ENCODE measurements at regions of chr12 and their contacts with region 1.

Region 1: DNA sequence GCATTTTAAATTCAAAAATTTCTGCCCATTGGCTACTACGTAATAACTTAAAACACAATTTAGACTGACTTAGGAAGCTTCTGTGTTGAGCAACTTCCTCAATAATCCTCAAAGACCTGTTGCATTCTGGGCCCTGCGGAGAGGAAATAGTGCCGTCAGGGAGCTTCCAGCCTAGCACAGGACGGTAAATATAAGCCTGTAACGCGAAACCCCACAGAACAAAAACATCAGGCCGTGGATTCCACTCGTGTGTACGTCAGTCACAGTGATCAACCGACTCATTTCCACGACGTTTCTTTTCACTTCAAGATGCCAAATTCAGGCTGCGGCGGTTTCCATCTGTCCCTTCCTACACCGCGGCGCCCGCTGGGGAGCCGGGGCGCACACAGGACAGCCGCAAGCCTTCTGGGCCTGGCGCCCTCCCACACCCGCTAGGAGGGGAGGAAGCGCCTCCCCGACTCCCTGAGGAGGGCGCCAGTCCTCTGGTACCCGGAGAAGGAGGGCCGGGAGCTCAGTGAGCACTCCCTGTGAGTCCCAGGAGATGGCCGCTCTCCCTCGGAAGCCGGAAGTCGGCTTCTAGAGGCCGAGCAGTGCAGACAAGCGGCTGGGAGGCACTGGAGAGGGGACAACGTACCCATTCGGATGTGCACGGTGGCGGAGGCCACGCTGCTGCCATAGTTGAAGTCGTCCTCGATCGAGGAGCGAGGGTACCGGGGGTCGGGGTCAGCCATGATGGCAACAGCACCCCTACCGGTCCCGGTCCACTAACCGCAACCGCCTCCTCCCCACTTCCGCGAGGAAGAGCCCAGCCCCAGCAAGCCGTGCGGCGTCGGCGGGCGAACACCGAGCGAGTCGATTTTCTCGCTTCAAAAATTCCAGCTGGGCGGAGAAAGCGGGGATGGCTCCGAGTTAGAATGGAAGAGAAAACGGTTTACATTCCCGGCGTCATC is at the start of gene TMBIM4:
- DNase-seq: peak; percentile 81
- H3K4me3 Mint-ChIP-seq: peak within 1 kb of the TSS; percentile 91
- H3K27ac Mint-ChIP-seq: peak within 1 kb of the TSS; percentile 99
- H3K4me1 Mint-ChIP-seq: peaks cover 24% of the 10 kb centered on the region
- H3K27me3 Mint-ChIP-seq: no peaks in the 10 kb centered on the region
- total RNA-seq, gene TMBIM4: 62.4 and 75.0 TPM in 2 replicates

Region 2: DNA sequence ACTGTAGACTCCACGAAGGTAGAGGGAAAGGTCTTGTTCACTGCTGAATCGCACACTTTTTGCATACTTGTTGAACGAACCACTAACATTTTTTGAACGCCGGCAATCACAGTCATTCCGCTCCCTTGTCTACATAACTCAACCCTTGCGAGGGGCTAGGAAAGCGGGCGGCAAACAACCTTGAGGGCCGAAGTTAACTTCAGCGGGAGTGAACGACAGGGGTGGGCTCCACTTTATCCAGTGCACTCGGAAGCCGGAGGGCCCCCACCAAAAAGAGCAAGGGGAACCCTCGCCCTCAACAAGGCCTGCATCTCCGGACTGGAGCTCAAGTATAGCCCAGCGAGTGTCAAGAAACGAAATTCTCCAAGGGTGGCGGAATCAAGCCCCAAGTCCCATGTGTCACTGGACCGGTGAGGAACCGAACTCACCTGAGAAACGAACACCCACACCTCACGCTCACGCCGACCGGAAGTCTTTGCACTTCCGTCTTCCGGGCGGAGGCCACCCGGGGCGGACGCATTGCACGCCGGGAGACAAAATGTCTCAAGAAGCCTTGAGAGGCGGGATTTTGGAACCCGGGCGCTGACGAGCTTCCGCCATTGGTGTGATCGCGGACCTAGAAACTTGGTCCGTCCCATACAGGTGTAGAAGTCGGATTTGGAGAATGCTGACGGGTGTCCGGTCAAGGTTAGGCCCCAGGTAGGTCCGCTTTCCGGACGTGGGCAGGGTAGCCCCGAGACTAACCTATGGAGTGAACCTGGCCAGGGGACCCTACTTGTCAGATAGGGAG is 39.0 kb before region 1 on chr12 and contains the start of gene LLPH:
- intact Hi-C with region 1: loop called (anchors 1 kb)
- DNase-seq: peak; percentile 85
- H3K4me3 Mint-ChIP-seq: peak within 1 kb of the TSS; percentile 99
- H3K27ac Mint-ChIP-seq: peak within 1 kb of the TSS; percentile 95
- H3K4me1 Mint-ChIP-seq: peaks cover 35% of the 10 kb centered on the region
- H3K27me3 Mint-ChIP-seq: no peaks in the 10 kb centered on the region
- total RNA-seq, gene LLPH: 31.0 and 33.7 TPM in 2 replicates

Measured in activated T-helper 2 cell treated with anti-CD3 and anti-CD28 coated beads, Interferon-gamma antibody, Interleukin-2, Interleukin-4, amounts not matched to agents 10 μg/mL and 5 μg/mL and 100 μg/mL, durations not matched to agents 14 hours and 24 hours and 36 hours (primary cell).